ENCODE measurements at regions of chr2 and their contacts with region 1.

Region 1: GRCh38 chr2:197239434-197239833 is 71.1 kb downstream of the ANKRD44 start:
- DNase-seq: no peak
- H3K4me3 Mint-ChIP-seq: peak overlapping the region; percentile 80
- H3K27ac Mint-ChIP-seq: peak overlapping the region; percentile 94
- H3K4me1 Mint-ChIP-seq: peaks cover 82% of the 10 kb centered on the region
- H3K27me3 Mint-ChIP-seq: no peaks in the 10 kb centered on the region

Region 2: GRCh38 chr2:197198890-197199289 is 40.5 kb before region 1 on chr2:
- intact Hi-C with region 1: loop called (anchors 1 kb)
- DNase-seq: peak; percentile 90
- H3K4me3 Mint-ChIP-seq: peak overlapping the region; percentile 87
- H3K27ac Mint-ChIP-seq: peak overlapping the region; percentile 98
- H3K4me1 Mint-ChIP-seq: peaks cover 91% of the 10 kb centered on the region
- H3K27me3 Mint-ChIP-seq: peaks cover 2% of the 10 kb centered on the region

Region 3: GRCh38 chr2:197209742-197210408 is 29.6 kb before region 1 on chr2:
- intact Hi-C with region 1: loop called (anchors 1 kb)
- DNase-seq: peak; percentile 53
- H3K4me3 Mint-ChIP-seq: peak overlapping the region; percentile 69
- H3K27ac Mint-ChIP-seq: peak overlapping the region; percentile 97
- H3K4me1 Mint-ChIP-seq: peaks cover 95% of the 10 kb centered on the region
- H3K27me3 Mint-ChIP-seq: no peaks in the 10 kb centered on the region

Region 4: DNA sequence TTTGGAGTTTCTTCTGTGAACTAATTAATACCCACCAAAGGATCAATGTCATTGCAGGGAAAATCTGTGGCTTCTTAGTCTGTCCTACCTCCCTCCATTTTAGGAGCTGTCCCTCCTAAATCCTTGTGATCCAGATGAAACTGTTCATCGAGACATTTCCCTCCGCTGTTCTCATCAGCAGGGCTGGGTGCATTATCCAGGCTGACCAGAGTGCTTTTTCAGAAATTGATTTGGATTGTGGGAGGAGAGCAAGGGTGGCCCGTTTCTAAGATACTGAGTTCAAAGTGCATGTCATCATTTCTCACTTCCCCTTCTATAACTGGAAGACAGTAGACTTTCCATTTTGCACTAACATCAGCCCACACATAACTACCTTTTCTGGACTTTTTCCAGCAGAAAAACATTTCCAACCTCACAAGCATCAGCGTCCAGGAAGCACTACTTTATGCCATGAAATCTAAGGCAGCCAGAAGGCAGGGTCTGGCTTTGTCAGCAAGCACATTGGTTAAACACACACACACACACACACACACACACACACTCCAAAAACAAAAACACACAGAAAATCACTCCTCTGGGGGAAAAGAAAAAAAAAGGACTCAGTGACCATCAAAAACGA is 23.0 kb before region 1 on chr2:
- intact Hi-C with region 1: loop called (anchors 1 kb)
- DNase-seq: no peak
- H3K4me3 Mint-ChIP-seq: peak overlapping the region; percentile 80
- H3K27ac Mint-ChIP-seq: peak overlapping the region; percentile 94
- H3K4me1 Mint-ChIP-seq: peaks cover 83% of the 10 kb centered on the region
- H3K27me3 Mint-ChIP-seq: no peaks in the 10 kb centered on the region

Region 5: GRCh38 chr2:197261808-197262226 is 22.4 kb after region 1 on chr2:
- intact Hi-C with region 1: no loop called
- DNase-seq: no peak
- H3K4me3 Mint-ChIP-seq: peak overlapping the region; percentile 57
- H3K27ac Mint-ChIP-seq: peak overlapping the region; percentile 78
- H3K4me1 Mint-ChIP-seq: peaks cover 87% of the 10 kb centered on the region
- H3K27me3 Mint-ChIP-seq: no peaks in the 10 kb centered on the region

Region 6: DNA sequence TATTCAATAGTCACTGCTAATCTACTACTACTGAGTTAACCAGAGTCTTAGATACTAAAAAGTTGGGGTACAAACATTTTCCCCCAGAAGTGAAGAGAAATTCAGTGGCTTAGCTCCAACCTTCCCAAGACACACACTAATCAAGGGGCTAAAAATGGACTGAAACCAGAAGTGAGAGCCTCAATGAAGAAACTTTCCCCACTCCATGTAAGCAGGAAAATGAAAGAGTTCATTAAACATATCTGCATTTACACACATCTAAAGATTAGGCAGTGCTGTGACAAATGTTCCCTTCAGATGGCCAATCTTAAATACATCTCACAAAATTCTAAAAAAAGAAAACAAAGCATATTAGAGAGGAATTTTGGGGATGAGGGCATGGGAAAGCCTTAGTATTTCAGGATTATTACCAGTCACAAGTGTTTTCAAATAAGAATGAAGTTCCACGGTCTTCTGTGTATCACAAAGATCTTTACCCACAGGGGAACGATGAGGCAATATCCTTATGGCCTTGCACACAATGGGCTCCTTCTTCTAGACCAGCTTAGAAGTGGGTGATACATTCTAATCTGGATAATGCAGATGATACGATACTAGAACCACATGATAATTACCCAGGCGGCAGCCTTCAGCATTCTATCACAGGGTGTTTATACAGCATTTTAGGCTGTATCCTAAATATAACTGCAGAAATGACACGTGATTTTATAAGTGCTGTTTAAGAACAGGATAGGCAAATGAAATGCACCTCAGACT is 54.0 kb after region 1 on chr2:
- intact Hi-C with region 1: loop called (anchors 2 kb)
- DNase-seq: no peak
- H3K4me3 Mint-ChIP-seq: peak overlapping the region; percentile 68
- H3K27ac Mint-ChIP-seq: peak overlapping the region; percentile 89
- H3K4me1 Mint-ChIP-seq: peaks cover 88% of the 10 kb centered on the region
- H3K27me3 Mint-ChIP-seq: no peaks in the 10 kb centered on the region

Region 7: DNA sequence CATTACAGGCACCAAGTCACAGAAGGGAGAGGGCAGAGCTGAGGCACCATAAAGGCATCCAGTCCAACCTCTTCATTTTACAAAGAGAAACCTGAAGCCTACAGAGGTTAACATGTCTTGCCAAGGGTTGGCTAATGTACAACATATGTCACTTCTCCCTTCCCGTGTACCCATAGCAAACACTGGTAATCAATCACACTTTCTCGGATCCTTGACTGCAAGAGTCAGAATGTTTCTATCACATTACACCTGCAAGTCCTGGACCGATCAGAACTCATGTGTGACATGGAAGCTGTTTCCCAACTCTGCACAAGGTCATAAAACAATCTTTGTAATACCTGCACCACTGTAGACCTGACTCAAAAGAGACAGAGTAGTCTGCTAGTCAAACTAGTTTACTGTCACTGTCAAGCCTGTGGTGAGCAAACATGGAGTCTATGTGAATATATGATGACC is 65.2 kb after region 1 on chr2:
- intact Hi-C with region 1: loop called (anchors 1 kb)
- DNase-seq: no peak
- H3K4me3 Mint-ChIP-seq: peak overlapping the region; percentile 84
- H3K27ac Mint-ChIP-seq: peak overlapping the region; percentile 95
- H3K4me1 Mint-ChIP-seq: peaks cover 87% of the 10 kb centered on the region
- H3K27me3 Mint-ChIP-seq: no peaks in the 10 kb centered on the region

Region 8: GRCh38 chr2:197322724-197323720 is 83.6 kb after region 1 on chr2:
- intact Hi-C with region 1: loop called (anchors 1 kb)
- DNase-seq: no peak
- H3K4me3 Mint-ChIP-seq: peak overlapping the region; percentile 71
- H3K27ac Mint-ChIP-seq: peak overlapping the region; percentile 87
- H3K4me1 Mint-ChIP-seq: peaks cover 50% of the 10 kb centered on the region
- H3K27me3 Mint-ChIP-seq: no peaks in the 10 kb centered on the region